ENCODE measurements at regions of chr2 and their contacts with region 1.

Region 1: DNA sequence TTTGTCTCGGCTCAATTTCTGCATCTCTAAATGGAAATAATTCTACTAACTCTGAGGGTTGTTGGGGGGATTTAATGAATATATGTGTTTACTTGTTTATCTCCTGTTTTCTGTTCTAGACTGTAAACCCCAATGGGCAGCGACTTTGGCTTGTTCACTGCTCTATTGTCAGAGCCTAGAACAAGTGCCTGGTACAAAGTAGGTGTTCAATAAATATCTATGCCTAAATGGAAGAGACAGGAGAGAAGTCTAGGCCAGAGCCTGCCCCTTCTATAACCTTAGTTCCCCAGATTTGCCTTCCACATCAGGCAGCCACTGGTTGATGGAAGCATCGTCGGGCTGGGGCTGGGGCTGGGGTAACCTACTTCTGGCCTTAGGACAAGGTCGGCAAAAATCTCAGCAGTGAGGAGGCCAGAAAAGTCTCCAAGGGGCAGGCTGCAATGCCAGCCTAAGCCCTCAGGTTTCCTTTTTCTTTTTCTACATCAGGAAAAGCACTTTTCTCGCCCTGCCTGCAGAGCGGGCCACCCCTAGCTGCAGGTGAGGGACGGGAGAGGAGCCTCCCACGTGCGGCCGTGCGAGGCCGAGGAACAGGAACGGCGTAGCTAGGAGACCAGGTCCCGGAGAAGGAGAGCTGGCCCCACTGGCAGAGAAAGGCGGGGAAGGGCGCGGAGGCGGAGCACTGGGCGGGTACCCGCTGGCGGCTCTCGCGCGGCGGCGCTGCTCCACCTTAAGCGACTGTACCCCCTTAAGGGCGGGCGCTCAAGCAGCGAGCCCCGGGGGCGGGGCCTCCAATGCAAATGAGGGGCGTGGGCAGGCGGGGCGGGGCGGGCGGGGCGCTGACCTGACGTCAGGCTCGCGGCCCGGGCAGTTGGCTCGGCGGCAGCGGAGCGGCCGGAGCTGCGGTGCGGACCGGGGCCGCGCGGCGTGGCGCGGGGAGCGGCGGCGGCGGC is at the start of gene CNNM4:
- DNase-seq: peak; percentile 95
- H3K4me3 ChIP-seq: peak within 1 kb of the TSS; percentile 58
- H3K27ac ChIP-seq: peak within 1 kb of the TSS; percentile 70
- H3K4me1 ChIP-seq: peaks cover 22% of the 10 kb centered on the region
- H3K27me3 ChIP-seq: no peaks in the 10 kb centered on the region
- CTCF ChIP-seq: no peak
- total RNA-seq, gene CNNM4: 15.0 and 16.3 TPM in 2 replicates

Region 2: DNA sequence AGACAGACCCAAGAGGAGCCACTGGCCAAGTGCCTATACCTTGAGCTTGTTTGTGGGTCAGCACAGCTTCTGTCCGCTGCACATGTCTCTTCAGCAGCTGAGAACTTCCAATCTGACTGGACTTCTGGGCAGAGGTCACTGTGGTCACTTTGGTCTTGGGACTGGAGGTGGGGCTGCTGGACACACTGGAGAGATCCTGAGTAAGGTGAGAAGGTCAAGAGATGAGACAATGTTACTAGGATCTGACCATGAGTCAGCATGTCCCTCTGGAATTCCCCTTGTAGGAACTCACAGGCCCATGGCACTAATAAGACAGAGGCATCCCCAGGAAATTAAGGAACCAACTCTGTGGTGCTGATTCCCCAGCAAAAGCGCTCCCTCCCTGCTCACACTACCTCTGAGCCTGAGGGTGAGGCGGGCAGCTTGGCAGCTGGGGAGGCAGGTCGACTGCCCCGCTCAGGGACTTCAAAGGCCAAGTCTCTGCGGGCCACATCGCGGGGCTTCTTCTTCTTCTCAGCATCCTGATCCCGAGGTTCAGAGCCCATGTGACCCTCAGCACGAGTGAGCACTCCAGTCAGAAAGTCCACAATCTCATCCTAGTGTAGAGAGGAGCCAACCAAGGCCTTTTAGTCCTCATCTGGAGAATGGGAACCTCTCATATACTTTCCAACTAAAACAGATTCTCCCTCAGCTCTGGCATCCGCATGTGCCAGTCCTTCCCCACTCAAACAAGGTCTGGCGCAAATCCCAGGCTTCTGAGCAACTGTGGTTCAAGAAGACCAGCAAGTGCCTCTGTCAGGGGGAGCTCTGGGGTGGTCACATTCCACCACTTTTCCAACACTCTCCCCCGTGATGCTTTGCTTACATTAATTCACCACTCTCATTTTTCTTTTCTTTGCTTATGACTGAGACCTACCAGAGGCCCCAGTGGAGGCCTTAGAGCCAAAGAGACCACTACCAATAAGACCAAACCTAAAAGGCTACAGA is 151.5 kb before region 1 on chr2:
- CTCF ChIA-PET with region 1: no interaction called
- POLR2A ChIA-PET with region 1: interaction called, 3 read pairs
- intact Hi-C with region 1: loop called (anchors 10 kb)
- DNase-seq: no peak
- H3K4me3 ChIP-seq: no peak overlapping the region
- H3K27ac ChIP-seq: peak overlapping the region; percentile 29
- H3K4me1 ChIP-seq: no peaks in the 10 kb centered on the region
- H3K27me3 ChIP-seq: no peaks in the 10 kb centered on the region
- CTCF ChIP-seq: no peak

Region 3: GRCh38 chr2:96638144-96639121 is 121.9 kb before region 1 on chr2 and contains the start of gene KANSL3:
- CTCF ChIA-PET with region 1: no interaction called
- POLR2A ChIA-PET with region 1: no interaction called
- intact Hi-C with region 1: loop called (anchors 5 kb)
- DNase-seq: peak; percentile 95
- H3K4me3 ChIP-seq: peak within 1 kb of the TSS; percentile 93
- H3K27ac ChIP-seq: peak within 1 kb of the TSS; percentile 82
- H3K4me1 ChIP-seq: peaks cover 27% of the 10 kb centered on the region
- H3K27me3 ChIP-seq: no peaks in the 10 kb centered on the region
- CTCF ChIP-seq: no peak
- total RNA-seq, gene KANSL3: 71.8 and 77.9 TPM in 2 replicates

Region 4: DNA sequence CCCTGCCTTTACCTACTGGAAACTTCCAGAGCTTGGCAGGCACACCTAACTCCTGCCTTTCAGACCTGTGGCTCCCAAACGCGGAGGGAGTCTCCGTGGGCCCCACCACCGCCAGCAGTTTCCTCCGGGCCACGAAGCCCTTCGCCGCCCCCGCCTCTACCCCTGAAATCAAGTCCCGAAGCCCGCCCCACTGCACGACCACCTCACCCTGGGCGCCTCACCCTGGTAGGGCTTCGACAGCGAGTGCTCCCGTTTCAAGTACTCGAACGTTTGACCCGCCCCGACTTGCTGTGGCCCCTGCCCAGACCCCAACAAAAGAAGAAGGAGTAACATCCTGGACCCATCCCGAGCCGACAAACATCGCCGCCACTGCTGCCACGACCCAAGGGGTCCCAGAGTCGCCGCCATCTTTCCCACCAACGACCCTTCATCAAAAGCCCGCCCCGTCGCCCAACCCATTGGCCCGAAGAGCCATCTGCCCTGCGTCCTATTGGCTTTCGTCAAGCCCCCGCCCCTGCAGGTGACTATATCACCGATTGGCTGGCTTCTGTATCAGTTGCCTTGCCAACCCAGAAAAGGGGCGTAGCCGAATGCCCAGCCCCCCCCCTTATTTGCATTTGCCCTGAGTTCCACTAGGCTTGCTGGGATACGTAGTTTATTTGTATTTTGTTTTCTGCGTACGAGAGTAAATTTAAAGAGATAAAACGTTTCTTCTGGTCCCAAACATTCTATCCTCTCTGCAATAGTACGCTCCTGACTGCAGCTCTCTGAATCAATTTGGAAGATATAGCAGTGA is 20.5 kb before region 1 on chr2 and contains the start of gene LMAN2L:
- CTCF ChIA-PET with region 1: interaction called, 23 read pairs
- POLR2A ChIA-PET with region 1: no interaction called
- intact Hi-C with region 1: loop called (anchors 2 kb)
- DNase-seq: peak; percentile 99
- H3K4me3 ChIP-seq: peak within 1 kb of the TSS; percentile 91
- H3K27ac ChIP-seq: peak within 1 kb of the TSS; percentile 78
- H3K4me1 ChIP-seq: peaks cover 4% of the 10 kb centered on the region
- H3K27me3 ChIP-seq: no peaks in the 10 kb centered on the region
- CTCF ChIP-seq: no peak
- total RNA-seq, gene LMAN2L: 23.1 and 24.0 TPM in 2 replicates

Measured in A673 (cell line).